ENCODE measurements at regions of chr2 and their contacts with region 1.

Region 1: DNA sequence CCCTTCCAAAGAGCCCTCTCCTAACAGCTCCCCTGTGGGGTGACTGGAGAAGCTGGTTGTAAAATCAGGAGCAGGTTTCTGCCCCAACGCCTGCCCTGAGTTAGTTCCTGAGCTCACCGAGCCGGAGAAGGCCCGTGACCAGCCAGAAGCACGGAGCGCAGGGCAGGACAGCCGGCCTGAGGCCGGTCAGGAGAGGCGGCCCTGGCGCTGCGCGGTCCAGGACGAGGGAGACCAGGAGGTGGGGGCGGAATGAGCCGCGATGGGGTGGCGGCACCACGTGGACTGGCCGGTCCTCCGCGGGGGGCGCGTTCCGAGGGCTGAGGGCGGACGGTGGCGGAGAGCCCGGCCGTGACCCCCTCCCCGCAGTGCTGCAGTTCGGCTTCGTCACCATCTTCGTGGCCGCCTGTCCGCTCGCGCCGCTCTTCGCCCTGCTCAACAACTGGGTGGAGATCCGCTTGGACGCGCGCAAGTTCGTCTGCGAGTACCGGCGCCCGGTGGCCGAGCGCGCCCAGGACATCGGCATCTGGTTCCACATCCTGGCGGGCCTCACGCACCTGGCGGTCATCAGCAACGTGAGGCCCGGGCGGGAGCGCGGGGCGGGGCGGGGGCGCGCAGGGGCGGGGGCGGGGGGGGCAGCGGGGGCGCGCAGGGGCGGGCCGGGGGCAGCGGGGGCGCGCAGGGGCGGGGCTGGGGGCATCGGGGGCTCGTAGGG is 29.0 kb downstream of the ANO7 start:
- DNase-seq: peak; percentile 54
- H3K4me3 ChIP-seq: peak overlapping the region in 2 of 3 experiments; percentile 55 to 58
- H3K27ac ChIP-seq: no peak overlapping the region
- H3K4me1 ChIP-seq: peaks cover 11% of the 10 kb centered on the region
- H3K27me3 ChIP-seq: no peaks in the 10 kb centered on the region
- CTCF ChIP-seq: no peak

Region 2: GRCh38 chr2:240819858-240820606 is 397.4 kb before region 1 on chr2 and contains the start of gene KIF1A:
- CTCF ChIA-PET with region 1: no interaction called
- dilution Hi-C with region 1: no loop called
- in situ Hi-C with region 1: no loop called
- intact Hi-C with region 1: no loop called
- DNase-seq: no peak
- H3K4me3 ChIP-seq: no peak within 1 kb of the TSS
- H3K27ac ChIP-seq: no peak within 1 kb of the TSS
- H3K4me1 ChIP-seq: no peaks in the 10 kb centered on the region
- H3K27me3 ChIP-seq: peaks cover 32% of the 10 kb centered on the region
- CTCF ChIP-seq: no peak
- total RNA-seq, gene KIF1A: under 0.01 TPM in 1 of 2 donors, not detected in the other

Region 3: DNA sequence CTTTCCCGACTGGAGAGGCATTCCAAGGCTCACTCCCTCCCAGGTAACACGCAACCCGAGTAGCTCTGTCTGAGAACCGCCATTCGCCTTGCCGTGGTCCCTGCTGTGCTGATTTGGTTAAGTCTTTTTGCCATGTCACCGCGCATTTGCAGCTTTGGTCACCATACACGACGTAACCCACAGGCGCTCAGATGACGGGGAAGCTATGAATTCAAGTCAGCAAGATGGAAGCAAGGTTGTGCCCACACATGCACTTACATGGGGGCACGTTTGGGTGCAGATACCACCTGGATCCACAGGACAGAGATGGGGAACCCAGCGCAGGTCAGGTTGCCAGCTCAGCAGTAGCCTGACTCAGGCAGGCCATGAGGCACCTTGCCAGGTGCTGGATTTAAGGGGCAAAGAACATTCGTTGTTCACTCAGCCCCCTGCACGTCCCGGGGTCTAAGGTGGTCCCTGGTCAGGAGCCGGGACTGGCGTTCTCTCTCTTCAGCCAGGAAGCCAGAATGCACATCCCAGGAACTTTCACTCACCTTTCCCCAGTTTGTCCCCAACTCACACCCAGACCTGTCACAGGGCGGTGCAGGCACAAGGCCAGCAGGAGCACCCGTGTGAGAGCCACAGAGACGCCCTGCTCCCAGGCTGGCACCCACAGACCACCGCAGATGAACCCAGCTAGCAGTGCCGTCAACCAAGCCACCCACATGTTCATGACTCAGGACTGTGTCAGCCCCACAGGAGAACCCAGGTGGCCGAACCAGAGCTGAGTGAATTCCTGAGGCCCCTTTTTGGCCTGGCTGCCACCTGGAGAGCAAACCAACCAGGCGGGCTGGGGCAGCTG is 199.2 kb before region 1 on chr2:
- CTCF ChIA-PET with region 1: no interaction called
- dilution Hi-C with region 1: no loop called
- in situ Hi-C with region 1: no loop called
- intact Hi-C with region 1: no loop called
- DNase-seq: peak; percentile 35
- H3K4me3 ChIP-seq: no peak overlapping the region
- H3K27ac ChIP-seq: no peak overlapping the region
- H3K4me1 ChIP-seq: peaks cover 8% of the 10 kb centered on the region
- H3K27me3 ChIP-seq: peaks cover 2% of the 10 kb centered on the region
- CTCF ChIP-seq: no peak

Region 4: GRCh38 chr2:241074901-241075540 is 142.5 kb before region 1 on chr2:
- CTCF ChIA-PET with region 1: no interaction called
- dilution Hi-C with region 1: no loop called
- in situ Hi-C with region 1: no loop called
- intact Hi-C with region 1: loop called (anchors 5 kb)
- DNase-seq: no peak
- H3K4me3 ChIP-seq: no peak overlapping the region
- H3K27ac ChIP-seq: no peak overlapping the region
- H3K4me1 ChIP-seq: no peaks in the 10 kb centered on the region
- H3K27me3 ChIP-seq: no peaks in the 10 kb centered on the region
- CTCF ChIP-seq: no peak

Region 5: DNA sequence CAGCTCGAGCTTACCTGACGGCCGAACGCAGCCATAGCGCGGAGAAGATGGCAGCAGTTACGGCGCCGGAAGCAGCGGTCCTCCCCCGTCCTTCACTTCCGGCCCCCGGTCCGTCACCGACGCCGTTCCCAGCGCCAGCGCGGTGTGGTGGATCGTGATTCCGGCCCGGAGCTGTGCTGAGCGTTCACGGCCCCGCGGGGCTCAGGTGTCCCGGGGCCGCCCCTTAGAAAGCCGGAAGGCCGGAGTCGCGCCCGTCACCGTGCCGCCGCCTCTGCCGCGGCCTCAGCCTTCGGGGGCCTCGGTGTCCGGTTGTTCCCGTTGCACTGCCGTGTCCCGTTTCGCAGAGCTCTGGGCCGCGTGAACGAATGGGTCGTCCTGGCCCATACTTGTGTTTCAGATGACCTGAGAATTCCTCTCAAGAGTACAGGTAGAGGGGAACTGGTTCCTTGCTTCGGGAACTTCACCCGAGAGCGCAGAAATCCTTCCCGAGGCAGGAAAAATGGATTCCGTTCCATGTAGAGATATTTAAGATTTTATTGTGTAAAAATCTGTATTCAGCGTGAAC is 115.2 kb before region 1 on chr2 and contains the start of gene MTERF4:
- CTCF ChIA-PET with region 1: no interaction called
- dilution Hi-C with region 1: no loop called
- in situ Hi-C with region 1: no loop called
- intact Hi-C with region 1: loop called (anchors 5 kb)
- DNase-seq: peak; percentile 87
- H3K4me3 ChIP-seq: peak within 1 kb of the TSS; percentile 93 to 95 (median 94)
- H3K27ac ChIP-seq: peak within 1 kb of the TSS; percentile 79
- H3K4me1 ChIP-seq: peaks cover 15% of the 10 kb centered on the region
- H3K27me3 ChIP-seq: no peaks in the 10 kb centered on the region
- CTCF ChIP-seq: no peak
- total RNA-seq, gene MTERF4: 18.5 to 21.7 TPM

Region 6: DNA sequence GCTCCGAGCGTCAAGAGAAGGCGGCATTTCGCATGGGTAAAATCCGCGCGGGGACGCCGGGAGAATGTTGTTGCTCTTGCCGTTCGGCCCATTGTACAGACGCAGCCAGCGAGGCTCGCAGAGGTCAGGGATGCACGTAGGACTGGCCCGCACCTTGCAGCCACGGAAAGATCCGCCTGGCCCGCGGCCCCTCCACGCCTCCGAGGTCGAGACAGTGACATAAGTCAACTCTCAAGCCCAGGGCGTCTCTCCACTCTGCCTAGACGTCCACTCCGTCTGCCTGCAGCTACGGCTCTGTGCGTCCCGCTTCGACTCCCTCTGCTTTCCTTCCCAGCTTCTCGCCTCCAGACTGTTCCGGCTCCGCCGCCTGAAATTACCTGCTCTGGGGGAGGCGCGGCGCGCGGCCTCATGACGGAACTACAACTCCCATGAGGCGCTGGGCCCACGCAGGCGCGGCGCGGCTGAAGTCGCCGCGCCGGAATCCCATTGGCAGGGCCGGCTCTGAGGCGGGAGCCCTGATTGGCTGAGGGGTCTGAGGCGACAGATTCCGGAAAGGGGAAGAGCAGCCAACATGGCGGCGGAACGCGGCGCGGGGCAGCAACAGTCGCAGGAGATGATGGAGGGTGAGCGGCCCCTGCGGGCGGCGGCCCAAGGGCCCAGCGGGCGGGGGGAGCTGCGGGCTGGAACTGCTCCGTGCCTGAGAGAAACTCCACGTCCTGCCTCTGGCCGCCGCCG is 67.4 kb before region 1 on chr2 and contains the start of gene PPP1R7:
- CTCF ChIA-PET with region 1: no interaction called
- dilution Hi-C with region 1: no loop called
- in situ Hi-C with region 1: no loop called
- intact Hi-C with region 1: loop called (anchors 2 kb)
- DNase-seq: peak; percentile 94
- H3K4me3 ChIP-seq: peak within 1 kb of the TSS; percentile 69 to 85 (median 80)
- H3K27ac ChIP-seq: peak within 1 kb of the TSS; percentile 56
- H3K4me1 ChIP-seq: peaks cover 22% of the 10 kb centered on the region
- H3K27me3 ChIP-seq: no peaks in the 10 kb centered on the region
- CTCF ChIP-seq: no peak
- total RNA-seq, gene PPP1R7: 39.2 to 66.5 TPM

Measured in mammary epithelial cell (primary cell).